PC-9 (cell line): ENCODE measurements at regions of chr5 and their contacts with region 1.

Region 1: DNA sequence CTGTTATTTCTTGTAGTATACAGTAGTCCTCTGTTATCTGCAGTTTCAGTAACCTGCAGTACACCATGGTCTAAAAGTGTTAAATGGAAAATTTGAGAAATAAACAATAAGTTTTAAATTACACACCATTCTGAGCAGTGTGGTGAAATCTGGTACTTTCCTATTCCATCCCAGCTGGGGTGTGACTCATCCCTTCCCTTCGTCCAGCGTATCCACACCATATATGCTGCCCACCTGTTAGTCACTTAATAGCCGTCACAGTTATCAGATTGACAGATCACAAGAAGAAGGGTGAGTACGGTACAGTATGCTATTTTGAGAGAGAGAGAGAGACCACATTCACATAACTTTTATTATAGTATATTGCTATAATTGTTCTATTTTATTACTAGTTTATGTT is 28.9 kb downstream of the FAM151B start:
- DNase-seq: peak; percentile 47 to 84
- H3K4me3 ChIP-seq: no peak overlapping the region
- H3K27ac ChIP-seq: peak overlapping the region; percentile 48; the same call in 1 of the 2 replicates
- H3K4me1 ChIP-seq: peaks cover 13% of the 10 kb centered on the region
- H3K27me3 ChIP-seq: no peaks in the 10 kb centered on the region
- CTCF ChIP-seq: no peak

Region 2: GRCh38 chr5:80204808-80205614 is 311.8 kb before region 1 on chr5:
- CTCF ChIA-PET with region 1: no interaction called
- POLR2A ChIA-PET with region 1: no interaction called
- intact Hi-C with region 1: no loop called
- DNase-seq: no peak
- H3K4me3 ChIP-seq: no peak overlapping the region
- H3K27ac ChIP-seq: 0 out of 2 replicates have a peak overlapping the region, but pooled peaks have one; percentile 28
- H3K4me1 ChIP-seq: no peaks in the 10 kb centered on the region; the same call in 1 of the 2 replicates
- H3K27me3 ChIP-seq: no peaks in the 10 kb centered on the region
- CTCF ChIP-seq: no peak

Region 3: GRCh38 chr5:80357671-80358070 is 159.2 kb before region 1 on chr5:
- CTCF ChIA-PET with region 1: no interaction called
- POLR2A ChIA-PET with region 1: interaction called, 13 read pairs
- intact Hi-C with region 1: no loop called
- DNase-seq: no peak
- H3K4me3 ChIP-seq: no peak overlapping the region
- H3K27ac ChIP-seq: no peak overlapping the region
- H3K4me1 ChIP-seq: no peaks in the 10 kb centered on the region
- H3K27me3 ChIP-seq: no peaks in the 10 kb centered on the region
- CTCF ChIP-seq: no peak

Region 4: GRCh38 chr5:80852331-80853245 is 335.8 kb after region 1 on chr5:
- CTCF ChIA-PET with region 1: no interaction called
- POLR2A ChIA-PET with region 1: no interaction called
- intact Hi-C with region 1: no loop called
- DNase-seq: no peak
- H3K4me3 ChIP-seq: no peak overlapping the region
- H3K27ac ChIP-seq: no peak overlapping the region
- H3K4me1 ChIP-seq: peaks cover 11% of the 10 kb centered on the region; the same call in 1 of the 2 replicates
- H3K27me3 ChIP-seq: no peaks in the 10 kb centered on the region
- CTCF ChIP-seq: no peak